Activated CD4-positive, alpha-beta T cell treated with anti-CD3 and anti-CD28 coated beads for 36 hours (primary cell): ENCODE measurements at regions of chr12 and their contacts with region 1.

Region 1: DNA sequence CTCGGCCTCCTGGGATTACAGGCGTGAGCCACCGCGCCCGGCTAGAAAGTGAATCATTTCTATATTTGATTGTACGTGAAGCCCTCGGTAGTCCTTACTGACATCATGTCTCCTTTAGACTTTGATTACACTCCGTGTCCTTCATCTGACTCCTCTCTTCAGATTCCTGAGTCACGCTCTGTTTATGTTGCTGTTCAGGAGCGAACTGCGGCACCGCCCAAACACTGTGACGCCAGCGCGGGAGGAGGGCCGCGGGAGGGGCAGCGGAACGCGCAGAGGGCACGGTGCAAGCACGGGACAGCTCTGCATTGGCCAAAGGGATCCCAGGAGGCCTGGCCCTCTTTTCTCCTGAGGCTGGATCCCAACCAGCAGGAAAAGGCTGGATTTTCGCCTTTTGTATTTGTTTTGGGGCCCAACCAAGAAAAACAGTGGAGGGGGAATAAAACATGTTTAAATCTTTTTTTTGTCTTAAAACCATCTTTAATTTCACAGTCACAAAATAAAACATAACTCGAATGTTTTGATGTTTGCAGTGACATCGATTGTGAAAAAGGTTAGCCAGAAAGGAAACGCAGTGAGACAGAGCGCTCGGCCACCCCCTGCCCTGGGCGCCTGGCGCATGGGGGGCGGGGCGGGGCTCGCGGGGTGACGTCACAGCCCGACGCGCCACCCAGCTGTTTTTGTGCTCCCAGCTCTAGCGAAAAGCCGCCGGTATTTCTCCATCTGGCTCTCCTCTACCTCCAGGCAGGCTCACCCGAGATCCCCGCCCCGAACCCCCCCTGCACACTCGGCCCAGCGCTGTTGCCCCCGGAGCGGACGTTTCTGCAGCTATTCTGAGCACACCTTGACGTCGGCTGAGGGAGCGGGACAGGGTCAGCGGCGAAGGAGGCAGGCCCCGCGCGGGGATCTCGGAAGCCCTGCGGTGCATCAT is at the start of gene GABARAPL1:
- DNase-seq: peak; percentile 93
- ATAC-seq: peak; percentile 86
- H3K4me3 Mint-ChIP-seq: peak within 1 kb of the TSS; percentile 82
- H3K27ac Mint-ChIP-seq: peak within 1 kb of the TSS; percentile 87
- H3K4me1 Mint-ChIP-seq: peaks cover 29% of the 10 kb centered on the region
- H3K27me3 Mint-ChIP-seq: no peaks in the 10 kb centered on the region
- total RNA-seq, gene GABARAPL1: 2.3 to 2.9 TPM

Region 2: GRCh38 chr12:9673404-9674225 is 538.9 kb before region 1 on chr12:
- CTCF ChIA-PET with region 1: no interaction called
- POLR2A ChIA-PET with region 1: no interaction called
- intact Hi-C with region 1: loop called in 1 of 2 experiments (anchors 5 kb)
- DNase-seq: peak; percentile 89
- ATAC-seq: peak; percentile 47
- H3K4me3 Mint-ChIP-seq: peak overlapping the region; percentile 93
- H3K27ac Mint-ChIP-seq: peak overlapping the region; percentile 99
- H3K4me1 Mint-ChIP-seq: peaks cover 47% of the 10 kb centered on the region
- H3K27me3 Mint-ChIP-seq: no peaks in the 10 kb centered on the region

Region 3: DNA sequence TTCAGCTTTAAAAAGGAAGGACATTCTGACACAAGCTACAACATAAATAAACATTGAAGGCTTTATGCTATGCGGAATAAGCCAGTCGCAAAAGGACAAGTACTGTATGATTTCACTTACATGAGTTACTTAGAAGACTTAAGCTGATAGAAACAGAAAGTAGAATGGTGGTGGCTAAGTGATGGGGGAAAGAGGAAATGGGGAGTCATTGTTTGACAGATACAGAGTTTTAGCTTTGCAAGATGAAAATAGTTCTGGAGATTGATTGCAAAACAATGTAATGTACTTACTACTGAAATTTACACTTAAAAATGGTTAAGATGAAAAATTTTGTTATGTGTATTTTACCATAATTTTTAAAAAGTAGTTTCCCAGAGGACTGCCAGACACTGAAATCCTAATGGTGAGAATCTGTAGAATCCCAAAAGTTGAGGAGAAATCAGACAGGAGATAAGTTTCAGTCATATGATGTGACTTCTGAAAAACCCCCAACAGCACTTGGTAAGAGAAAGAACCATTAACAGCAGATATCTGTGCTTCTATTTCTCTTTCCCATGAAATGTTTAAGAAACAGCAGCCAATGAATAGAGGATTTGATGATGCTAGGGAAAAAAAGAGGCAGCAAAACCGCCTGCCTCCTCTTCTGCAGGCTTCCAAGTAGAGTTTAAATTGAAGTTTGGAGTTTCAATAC is 263.7 kb before region 1 on chr12:
- CTCF ChIA-PET with region 1: no interaction called
- POLR2A ChIA-PET with region 1: no interaction called
- intact Hi-C with region 1: loop called in 1 of 2 experiments (anchors 5 kb)
- DNase-seq: no peak
- ATAC-seq: peak; percentile 95
- H3K4me3 Mint-ChIP-seq: no peak overlapping the region
- H3K27ac Mint-ChIP-seq: peak overlapping the region; percentile 9
- H3K4me1 Mint-ChIP-seq: peaks cover 47% of the 10 kb centered on the region
- H3K27me3 Mint-ChIP-seq: no peaks in the 10 kb centered on the region

Region 4: GRCh38 chr12:10293570-10294227 is 81.2 kb after region 1 on chr12:
- CTCF ChIA-PET with region 1: no interaction called
- POLR2A ChIA-PET with region 1: no interaction called
- intact Hi-C with region 1: loop called (anchors 1 to 2 kb)
- DNase-seq: no peak
- ATAC-seq: peak; percentile 54
- H3K4me3 Mint-ChIP-seq: no peak overlapping the region
- H3K27ac Mint-ChIP-seq: no peak overlapping the region
- H3K4me1 Mint-ChIP-seq: peaks cover 21% of the 10 kb centered on the region
- H3K27me3 Mint-ChIP-seq: peaks cover 5% of the 10 kb centered on the region

Region 5: DNA sequence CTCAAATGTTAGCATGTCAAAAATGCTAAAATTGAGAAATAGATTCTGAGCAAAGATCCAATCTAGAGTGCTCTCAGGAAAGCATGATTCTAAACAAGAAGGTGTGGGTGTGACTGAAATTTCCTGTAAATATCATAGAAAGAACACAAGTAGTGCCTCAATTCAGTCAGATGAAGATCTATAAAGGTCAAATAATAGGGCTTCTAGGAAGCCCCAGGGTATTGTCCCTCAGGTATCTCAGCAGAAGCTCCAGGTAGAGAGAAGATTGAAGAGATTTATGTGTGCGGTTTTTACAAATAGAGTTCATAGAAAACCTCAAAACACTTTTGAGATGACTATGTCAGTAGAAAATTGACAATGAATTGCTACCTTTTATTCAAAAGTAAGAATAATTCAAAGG is 108.2 kb after region 1 on chr12:
- CTCF ChIA-PET with region 1: no interaction called
- POLR2A ChIA-PET with region 1: no interaction called
- intact Hi-C with region 1: loop called (anchors 1 to 2 kb)
- DNase-seq: no peak
- ATAC-seq: peak; percentile 91
- H3K4me3 Mint-ChIP-seq: no peak overlapping the region
- H3K27ac Mint-ChIP-seq: peak overlapping the region; percentile 32
- H3K4me1 Mint-ChIP-seq: peaks cover 30% of the 10 kb centered on the region
- H3K27me3 Mint-ChIP-seq: peaks cover 10% of the 10 kb centered on the region

Region 6: DNA sequence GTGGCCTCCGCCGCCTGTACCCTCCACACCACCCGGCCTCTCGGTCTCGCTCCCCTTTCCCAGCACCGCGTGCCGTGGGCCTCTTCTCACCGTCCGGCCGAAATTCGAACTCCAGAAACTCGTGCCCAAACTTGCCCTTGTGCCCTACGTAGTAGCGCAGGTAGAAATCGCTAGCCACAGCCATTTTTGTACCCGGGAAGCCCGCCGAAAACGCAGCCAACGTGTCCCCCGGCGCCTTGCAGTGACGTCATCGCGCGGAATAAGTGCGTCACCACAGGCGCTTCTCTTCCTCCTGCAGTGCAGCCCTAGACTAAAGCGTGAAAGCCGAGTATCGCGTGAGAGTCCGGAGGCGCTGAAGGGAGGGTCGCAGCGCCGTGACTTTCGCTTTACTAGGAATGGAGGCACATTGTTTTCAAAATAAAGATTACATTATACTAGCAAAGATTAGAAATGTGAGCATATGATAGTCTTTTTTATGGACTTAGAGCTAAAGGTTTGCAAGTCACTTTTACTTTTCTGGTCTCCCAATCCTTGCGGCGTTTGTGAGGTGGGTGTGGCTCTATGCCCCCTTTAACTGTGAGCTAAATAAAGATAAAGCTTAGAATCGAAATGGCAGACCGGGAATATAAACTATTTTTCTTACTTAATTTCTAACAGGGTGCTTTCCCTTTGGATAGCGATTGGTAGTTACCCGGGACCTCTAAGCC is 401.0 kb after region 1 on chr12 and contains the start of gene MAGOHB:
- CTCF ChIA-PET with region 1: no interaction called
- POLR2A ChIA-PET with region 1: no interaction called
- intact Hi-C with region 1: loop called (anchors 1 kb)
- DNase-seq: peak; percentile 99
- ATAC-seq: peak; percentile 96
- H3K4me3 Mint-ChIP-seq: peak within 1 kb of the TSS; percentile 99
- H3K27ac Mint-ChIP-seq: peak within 1 kb of the TSS; percentile 100
- H3K4me1 Mint-ChIP-seq: peaks cover 25% of the 10 kb centered on the region
- H3K27me3 Mint-ChIP-seq: peaks cover 6% of the 10 kb centered on the region
- total RNA-seq, gene MAGOHB: 66.3 to 89.3 TPM

Region 7: GRCh38 chr12:11171145-11171968 is 958.9 kb after region 1 on chr12 and contains the start of gene SMIM10L1:
- CTCF ChIA-PET with region 1: no interaction called
- POLR2A ChIA-PET with region 1: no interaction called
- intact Hi-C with region 1: loop called in 1 of 2 experiments (anchors 10 kb)
- DNase-seq: peak; percentile 95
- ATAC-seq: peak; percentile 97
- H3K4me3 Mint-ChIP-seq: peak within 1 kb of the TSS; percentile 90
- H3K27ac Mint-ChIP-seq: peak within 1 kb of the TSS; percentile 97
- H3K4me1 Mint-ChIP-seq: peaks cover 51% of the 10 kb centered on the region
- H3K27me3 Mint-ChIP-seq: no peaks in the 10 kb centered on the region
- total RNA-seq, gene SMIM10L1: 6.8 to 7.9 TPM

Region 8: GRCh38 chr12:11482955-11483354 is 1270.5 kb after region 1 on chr12:
- CTCF ChIA-PET with region 1: no interaction called
- POLR2A ChIA-PET with region 1: no interaction called
- intact Hi-C with region 1: no loop called
- DNase-seq: no peak
- ATAC-seq: no peak
- H3K4me3 Mint-ChIP-seq: no peak overlapping the region
- H3K27ac Mint-ChIP-seq: no peak overlapping the region
- H3K4me1 Mint-ChIP-seq: peaks cover 5% of the 10 kb centered on the region
- H3K27me3 Mint-ChIP-seq: no peaks in the 10 kb centered on the region